Lower leg skin (tissue), 4 donors: ENCODE measurements at regions of chr13 and their contacts with region 1.

Region 1: GRCh38 chr13:76955193-76955592 is 6.9 kb downstream of the ACOD1 start:
- DNase-seq: no peak
- H3K4me3 ChIP-seq: no peak overlapping the region
- CTCF ChIP-seq: no peak
- POLR2A ChIP-seq: no peak

Region 2: GRCh38 chr13:77338961-77339401 is 383.8 kb after region 1 on chr13:
- intact Hi-C with region 1: no loop called
- DNase-seq: no peak
- H3K4me3 ChIP-seq: no peak overlapping the region
- CTCF ChIP-seq: no peak
- POLR2A ChIP-seq: no peak

Region 3: DNA sequence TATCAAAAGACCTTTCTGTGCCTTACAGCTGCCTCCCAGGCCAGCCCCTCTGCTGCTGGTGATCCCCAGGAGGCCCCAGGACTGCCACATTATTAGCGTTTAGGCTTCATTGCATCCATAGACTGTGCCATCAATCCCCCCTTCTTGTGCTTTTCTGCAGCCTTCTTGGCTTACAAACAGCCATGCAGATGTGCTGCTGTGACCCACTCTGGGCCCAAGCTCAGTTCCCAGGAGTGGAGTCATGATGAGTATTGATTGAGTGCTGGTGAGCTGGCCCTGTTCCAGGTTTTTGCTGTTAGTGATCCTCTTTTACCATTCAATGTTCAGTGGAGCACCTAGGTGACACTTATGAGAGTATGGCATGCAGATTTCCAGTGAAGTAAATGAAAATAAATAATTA is 682.4 kb after region 1 on chr13:
- intact Hi-C with region 1: no loop called
- DNase-seq: no peak
- H3K4me3 ChIP-seq: no peak overlapping the region
- CTCF ChIP-seq: no peak
- POLR2A ChIP-seq: no peak

Region 4: GRCh38 chr13:78129823-78130222 is 1174.6 kb after region 1 on chr13:
- intact Hi-C with region 1: loop called (anchors 5 kb)
- DNase-seq: no peak
- H3K4me3 ChIP-seq: no peak overlapping the region
- CTCF ChIP-seq: no peak
- POLR2A ChIP-seq: no peak